OCI-LY7 (cell line): ENCODE measurements at regions of chr5 and their contacts with region 1.

Region 1: GRCh38 chr5:143403593-143404415 is at the start of gene NR3C1:
- DNase-seq: peak; percentile 86
- H3K4me3 ChIP-seq: peak within 1 kb of the TSS; percentile 91
- H3K27ac ChIP-seq: peak within 1 kb of the TSS; percentile 96
- H3K4me1 ChIP-seq: peaks cover 46% of the 10 kb centered on the region
- CTCF ChIP-seq: peak; percentile 41
- total RNA-seq, gene NR3C1: 45.0 and 45.6 TPM in 2 replicates

Region 2: GRCh38 chr5:142922223-142922952 is 481.4 kb before region 1 on chr5:
- CTCF ChIA-PET with region 1: no interaction called
- POLR2A ChIA-PET with region 1: no interaction called
- intact Hi-C with region 1: loop called (anchors 5 kb)
- DNase-seq: peak; percentile 64
- H3K4me3 ChIP-seq: no peak overlapping the region
- H3K27ac ChIP-seq: no peak overlapping the region
- H3K4me1 ChIP-seq: no peaks in the 10 kb centered on the region
- CTCF ChIP-seq: peak; percentile 81

Region 3: DNA sequence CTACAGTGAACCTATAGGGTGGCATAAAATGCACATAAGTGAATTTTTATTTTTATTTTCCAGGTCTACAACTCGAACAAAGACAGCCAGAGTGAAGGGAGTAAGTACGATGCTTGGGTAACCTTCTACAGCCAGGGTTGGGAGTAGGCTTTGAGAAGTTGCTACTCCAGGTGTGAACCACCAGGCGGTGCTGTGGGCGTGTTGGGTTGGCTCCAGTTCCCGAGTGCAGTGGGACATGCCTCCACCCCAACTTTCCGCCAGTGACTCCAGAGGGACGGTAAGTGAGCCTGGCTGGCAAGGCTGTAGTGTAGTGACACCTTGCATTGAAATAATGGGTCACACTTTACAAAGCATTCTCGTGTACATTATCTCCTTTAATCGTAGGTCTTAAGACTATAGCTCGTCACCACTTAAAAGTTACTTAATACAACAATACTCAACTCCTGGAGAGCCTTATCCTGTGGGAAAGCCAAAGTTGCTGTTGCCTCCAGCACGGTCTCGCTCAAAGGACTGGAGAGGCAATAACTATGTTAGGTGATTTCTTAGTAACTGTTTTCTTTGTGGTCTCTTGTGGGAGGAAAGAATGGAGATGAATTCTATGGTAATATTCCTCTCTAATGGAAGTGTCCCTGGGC is 389.7 kb before region 1 on chr5:
- CTCF ChIA-PET with region 1: no interaction called
- POLR2A ChIA-PET with region 1: no interaction called
- intact Hi-C with region 1: loop called (anchors 2 kb)
- DNase-seq: peak; percentile 45
- H3K4me3 ChIP-seq: no peak overlapping the region
- H3K27ac ChIP-seq: no peak overlapping the region
- H3K4me1 ChIP-seq: no peaks in the 10 kb centered on the region
- CTCF ChIP-seq: peak; percentile 76

Region 4: GRCh38 chr5:143066556-143067281 is 337.1 kb before region 1 on chr5:
- CTCF ChIA-PET with region 1: no interaction called
- POLR2A ChIA-PET with region 1: no interaction called
- intact Hi-C with region 1: no loop called
- DNase-seq: peak; percentile 63
- H3K4me3 ChIP-seq: no peak overlapping the region
- H3K27ac ChIP-seq: no peak overlapping the region
- H3K4me1 ChIP-seq: peaks cover 16% of the 10 kb centered on the region
- CTCF ChIP-seq: no peak

Region 5: GRCh38 chr5:143229896-143230675 is 173.7 kb before region 1 on chr5:
- CTCF ChIA-PET with region 1: no interaction called
- POLR2A ChIA-PET with region 1: interaction called, 3 read pairs
- intact Hi-C with region 1: loop called (anchors 5 kb)
- DNase-seq: peak; percentile 83
- H3K4me3 ChIP-seq: peak overlapping the region; percentile 31
- H3K27ac ChIP-seq: peak overlapping the region; percentile 70
- H3K4me1 ChIP-seq: peaks cover 22% of the 10 kb centered on the region
- CTCF ChIP-seq: no peak

Region 6: GRCh38 chr5:143435210-143435657 is 31.4 kb after region 1 on chr5:
- CTCF ChIA-PET with region 1: interaction called, 4 read pairs
- POLR2A ChIA-PET with region 1: interaction called, 119 read pairs
- intact Hi-C with region 1: loop called (anchors 1 kb)
- DNase-seq: peak; percentile 95
- H3K4me3 ChIP-seq: peak overlapping the region; percentile 72
- H3K27ac ChIP-seq: peak overlapping the region; percentile 96
- H3K4me1 ChIP-seq: peaks cover 68% of the 10 kb centered on the region
- CTCF ChIP-seq: no peak

Region 7: DNA sequence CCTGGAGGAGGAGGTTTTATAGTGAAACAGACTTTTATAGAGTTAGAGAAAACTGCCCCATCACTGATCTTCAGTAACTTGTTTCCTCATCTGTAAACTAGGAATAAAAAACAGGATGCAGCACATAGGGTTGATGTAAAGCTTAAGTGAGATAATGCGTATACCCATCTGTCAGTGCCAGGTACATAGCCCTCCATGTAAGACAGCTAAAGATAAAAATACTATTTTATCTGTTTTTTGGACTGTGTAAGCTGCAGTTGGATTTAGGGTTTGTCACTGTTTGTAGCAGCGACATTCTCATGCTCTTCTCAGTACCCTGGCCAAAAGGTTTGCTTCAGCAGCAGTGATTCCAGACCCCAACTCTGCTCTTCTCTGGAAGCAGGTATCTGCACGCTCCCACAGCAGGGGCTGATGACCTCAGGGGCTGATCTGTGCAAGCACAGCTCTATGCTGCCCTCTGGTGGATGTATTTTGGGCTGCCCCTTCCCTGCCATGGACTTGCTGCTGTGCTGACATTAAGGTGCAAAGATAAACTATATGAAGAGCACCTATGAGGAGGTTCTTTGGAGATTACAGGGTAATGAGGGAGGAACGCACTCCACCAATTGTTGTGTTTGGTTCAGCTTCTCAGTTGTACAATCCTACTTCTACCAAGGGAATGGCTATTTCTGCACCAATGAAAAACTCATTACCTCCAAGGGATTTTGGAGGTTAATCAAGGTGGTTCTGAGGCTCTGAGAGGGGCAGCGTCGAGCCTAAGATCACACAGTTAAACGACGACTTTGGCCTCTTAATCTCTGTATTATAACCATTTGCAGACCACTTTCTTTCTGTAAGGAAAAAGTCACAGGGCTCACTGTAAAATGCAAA is 421.3 kb after region 1 on chr5:
- CTCF ChIA-PET with region 1: no interaction called
- POLR2A ChIA-PET with region 1: no interaction called
- intact Hi-C with region 1: loop called (anchors 1 kb)
- DNase-seq: peak; percentile 86
- H3K4me3 ChIP-seq: no peak overlapping the region
- H3K27ac ChIP-seq: no peak overlapping the region
- H3K4me1 ChIP-seq: peaks cover 8% of the 10 kb centered on the region
- CTCF ChIP-seq: peak; percentile 97